ENCODE measurements at regions of chr12 and their contacts with region 1.

Region 1: DNA sequence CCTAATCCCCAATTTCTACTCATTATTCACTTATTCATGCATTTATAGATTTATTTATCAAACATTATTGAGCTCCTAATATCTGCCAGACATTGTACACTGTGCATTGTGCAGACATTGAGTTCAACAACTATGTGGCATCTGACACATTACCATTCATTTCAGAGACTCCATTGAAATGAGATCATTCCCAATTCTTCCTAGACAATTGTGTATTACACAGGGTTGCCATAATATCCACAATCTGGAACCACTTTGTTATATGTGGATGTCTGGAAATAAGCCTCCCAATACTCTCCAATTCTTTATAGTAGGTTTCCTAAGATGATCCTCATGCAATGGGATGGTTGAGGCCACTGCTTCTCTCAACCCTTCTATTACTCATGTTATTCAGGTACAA is 165.0 kb downstream of the OTOGL start:
- DNase-seq: no peak
- H3K4me3 ChIP-seq: no peak overlapping the region
- H3K27ac ChIP-seq: no peak overlapping the region
- H3K4me1 ChIP-seq: no peaks in the 10 kb centered on the region
- H3K27me3 ChIP-seq: no peaks in the 10 kb centered on the region
- CTCF ChIP-seq: no peak
- EP300 ChIP-seq: no peak
- POLR2A ChIP-seq: no peak
- RAD21 ChIP-seq: no peak

Region 2: GRCh38 chr12:80195074-80195726 is 69.2 kb before region 1 on chr12:
- CTCF ChIA-PET with region 1: interaction called, 136 read pairs
- POLR2A ChIA-PET with region 1: no interaction called
- DNase-seq: no peak
- H3K4me3 ChIP-seq: no peak overlapping the region
- H3K27ac ChIP-seq: no peak overlapping the region
- H3K4me1 ChIP-seq: no peaks in the 10 kb centered on the region
- H3K27me3 ChIP-seq: no peaks in the 10 kb centered on the region
- CTCF ChIP-seq: peak in 2 of 3 experiments; percentile 64 to 67; a peak in 3 of 4 replicates
- EP300 ChIP-seq: no peak
- POLR2A ChIP-seq: no peak
- RAD21 ChIP-seq: peak; percentile 63 to 76